ENCODE measurements at regions of chr20 and their contacts with region 1.

Region 1: GRCh38 chr20:23995905-23996666 is 7.5 kb upstream of the GGTLC1 start:
- DNase-seq: peak; percentile 7
- ATAC-seq: no peak
- H3K4me3 ChIP-seq: no peak overlapping the region
- H3K27ac ChIP-seq: no peak overlapping the region
- H3K4me1 ChIP-seq: no peaks in the 10 kb centered on the region
- H3K27me3 ChIP-seq: no peaks in the 10 kb centered on the region
- CTCF ChIP-seq: peak; percentile 33 to 63 (median 59); a peak in 5 of 6 replicates
- POLR2A ChIP-seq: no peak
- RAD21 ChIP-seq: peak; percentile 45

Region 2: DNA sequence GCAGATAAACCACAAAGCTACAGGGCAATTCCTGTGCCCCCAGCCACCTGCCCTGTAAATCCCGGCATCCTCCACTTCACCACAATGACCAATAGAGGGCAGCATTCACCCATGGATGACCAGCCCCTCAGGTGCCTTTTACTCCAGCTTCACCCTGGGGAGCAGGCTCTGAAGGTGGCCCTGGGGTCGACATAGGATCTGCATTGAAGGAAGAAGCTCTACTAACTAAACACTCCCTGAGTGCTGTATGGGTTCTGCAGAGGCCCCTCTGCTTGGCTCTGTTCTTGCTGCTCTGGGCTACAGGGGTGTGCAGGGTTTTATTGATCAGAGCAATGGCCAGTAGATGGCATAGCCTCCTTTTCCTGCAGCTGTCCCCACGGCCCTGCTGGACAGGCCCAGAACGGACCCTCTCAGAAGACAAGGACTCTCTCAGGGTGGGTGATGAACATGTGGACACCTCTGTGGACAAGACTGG is 327.6 kb before region 1 on chr20:
- CTCF ChIA-PET with region 1: no interaction called
- POLR2A ChIA-PET with region 1: no interaction called
- RAD21 ChIA-PET with region 1: no interaction called
- intact Hi-C with region 1: loop called (anchors 2 kb)
- DNase-seq: peak; percentile 54
- ATAC-seq: peak; percentile 95
- H3K4me3 ChIP-seq: no peak overlapping the region
- H3K27ac ChIP-seq: no peak overlapping the region
- H3K4me1 ChIP-seq: no peaks in the 10 kb centered on the region
- H3K27me3 ChIP-seq: peaks cover 2% of the 10 kb centered on the region; the same call in 1 of the 2 replicates
- CTCF ChIP-seq: peak; percentile 81 to 92 (median 89)
- POLR2A ChIP-seq: no peak
- RAD21 ChIP-seq: peak; percentile 77

Region 3: DNA sequence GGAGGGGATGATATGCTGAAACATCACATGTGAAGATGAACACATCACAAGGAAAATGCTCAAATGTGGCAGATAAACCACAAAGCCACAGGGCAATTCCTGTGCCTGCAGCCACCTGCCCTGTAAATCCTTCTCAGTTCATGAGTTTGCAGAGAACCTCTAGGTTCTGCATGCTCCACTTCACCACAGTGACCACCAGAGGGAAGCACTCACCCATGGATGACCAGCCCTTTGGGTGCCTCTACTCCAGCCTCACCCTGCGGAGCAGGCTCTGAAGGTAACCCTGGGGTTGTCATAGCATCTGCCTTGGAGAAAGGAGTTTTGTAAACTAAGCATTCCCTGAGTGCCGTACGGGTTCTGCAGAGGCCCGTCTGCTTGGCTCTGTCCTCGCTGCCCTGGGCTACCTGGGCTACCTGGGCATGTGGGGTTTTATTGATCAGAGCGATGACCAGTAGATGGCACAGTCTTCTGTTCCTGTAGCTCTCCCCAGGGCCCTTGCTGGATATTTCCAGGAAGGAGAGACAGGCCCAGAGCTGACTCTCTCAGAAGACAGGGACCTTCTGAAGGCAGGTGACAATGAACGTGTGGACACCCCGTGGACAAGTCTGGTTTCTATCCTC is 213.6 kb before region 1 on chr20:
- CTCF ChIA-PET with region 1: no interaction called
- POLR2A ChIA-PET with region 1: no interaction called
- RAD21 ChIA-PET with region 1: no interaction called
- intact Hi-C with region 1: loop called (anchors 10 kb)
- DNase-seq: no peak
- ATAC-seq: peak; percentile 95
- H3K4me3 ChIP-seq: no peak overlapping the region
- H3K27ac ChIP-seq: no peak overlapping the region
- H3K4me1 ChIP-seq: no peaks in the 10 kb centered on the region
- H3K27me3 ChIP-seq: no peaks in the 10 kb centered on the region
- CTCF ChIP-seq: peak; percentile 52 to 83 (median 75); a peak in 5 of 6 replicates
- POLR2A ChIP-seq: no peak
- RAD21 ChIP-seq: peak; percentile 55

Region 4: GRCh38 chr20:23889775-23890211 is 106.3 kb before region 1 on chr20:
- CTCF ChIA-PET with region 1: no interaction called
- POLR2A ChIA-PET with region 1: no interaction called
- RAD21 ChIA-PET with region 1: no interaction called
- intact Hi-C with region 1: loop called (anchors 5 kb)
- DNase-seq: peak; percentile 10
- ATAC-seq: peak; percentile 97
- H3K4me3 ChIP-seq: no peak overlapping the region
- H3K27ac ChIP-seq: no peak overlapping the region
- H3K4me1 ChIP-seq: no peaks in the 10 kb centered on the region
- H3K27me3 ChIP-seq: peaks cover 16% of the 10 kb centered on the region
- CTCF ChIP-seq: peak; percentile 69 to 75 (median 73)
- POLR2A ChIP-seq: no peak
- RAD21 ChIP-seq: peak; percentile 71

Region 5: DNA sequence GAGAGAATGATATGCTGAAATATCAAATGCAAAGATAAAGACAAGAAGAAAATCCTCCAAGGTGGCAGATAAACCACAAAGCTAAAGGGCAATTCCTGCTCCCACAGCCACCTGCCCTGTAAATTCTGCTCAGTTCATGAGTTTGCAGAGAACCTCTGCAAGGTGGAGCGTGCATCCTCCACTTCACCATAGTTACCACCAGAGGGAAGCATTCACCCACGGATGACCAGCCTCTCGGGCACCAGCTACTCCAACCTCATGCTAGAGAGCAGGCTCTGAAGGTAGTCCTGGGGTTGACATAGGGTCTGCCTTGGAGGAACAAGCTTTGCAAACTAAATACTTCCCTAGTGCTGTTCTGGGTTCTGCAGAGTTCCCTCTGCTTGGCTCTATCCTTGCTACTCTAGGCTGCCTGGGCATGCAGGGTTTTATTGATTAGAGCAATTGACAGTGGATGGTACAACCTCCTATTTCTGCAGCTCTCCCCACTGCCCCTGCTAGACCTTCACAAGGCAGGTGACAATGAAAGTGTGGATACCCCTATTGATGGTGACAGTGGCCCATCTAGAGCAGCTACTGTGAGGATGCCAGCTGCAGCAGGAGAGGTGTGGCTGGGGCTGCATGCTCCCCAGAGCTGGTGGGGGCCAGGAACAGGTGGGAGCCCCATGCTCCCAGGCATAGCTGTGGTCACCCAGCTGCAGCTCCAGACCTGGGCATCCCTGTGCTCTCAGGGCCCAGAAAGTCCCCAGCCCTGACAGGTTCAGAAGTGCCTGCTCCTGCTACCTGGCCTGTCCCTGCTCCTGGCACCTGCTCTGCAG is 58.6 kb before region 1 on chr20:
- CTCF ChIA-PET with region 1: interaction called, 4 read pairs
- POLR2A ChIA-PET with region 1: no interaction called
- RAD21 ChIA-PET with region 1: no interaction called
- intact Hi-C with region 1: loop called (anchors 5 kb)
- DNase-seq: peak; percentile 16
- ATAC-seq: peak; percentile 87
- H3K4me3 ChIP-seq: no peak overlapping the region
- H3K27ac ChIP-seq: no peak overlapping the region
- H3K4me1 ChIP-seq: no peaks in the 10 kb centered on the region
- H3K27me3 ChIP-seq: 0 out of 2 replicates have a peak, but pooled peaks cover 4% of the 10 kb centered on the region
- CTCF ChIP-seq: peak; percentile 28 to 68 (median 50); a peak in 4 of 6 replicates
- POLR2A ChIP-seq: no peak
- RAD21 ChIP-seq: peak; percentile 66

Region 6: GRCh38 chr20:24146231-24146634 is 150.1 kb after region 1 on chr20:
- CTCF ChIA-PET with region 1: no interaction called
- POLR2A ChIA-PET with region 1: no interaction called
- RAD21 ChIA-PET with region 1: no interaction called
- intact Hi-C with region 1: no loop called
- DNase-seq: no peak
- ATAC-seq: no peak
- H3K4me3 ChIP-seq: no peak overlapping the region
- H3K27ac ChIP-seq: no peak overlapping the region
- H3K4me1 ChIP-seq: no peaks in the 10 kb centered on the region
- H3K27me3 ChIP-seq: no peaks in the 10 kb centered on the region
- CTCF ChIP-seq: no peak
- POLR2A ChIP-seq: no peak
- RAD21 ChIP-seq: no peak